BJ (cell line): ENCODE measurements at regions of chr11 and their contacts with region 1.

Region 1: DNA sequence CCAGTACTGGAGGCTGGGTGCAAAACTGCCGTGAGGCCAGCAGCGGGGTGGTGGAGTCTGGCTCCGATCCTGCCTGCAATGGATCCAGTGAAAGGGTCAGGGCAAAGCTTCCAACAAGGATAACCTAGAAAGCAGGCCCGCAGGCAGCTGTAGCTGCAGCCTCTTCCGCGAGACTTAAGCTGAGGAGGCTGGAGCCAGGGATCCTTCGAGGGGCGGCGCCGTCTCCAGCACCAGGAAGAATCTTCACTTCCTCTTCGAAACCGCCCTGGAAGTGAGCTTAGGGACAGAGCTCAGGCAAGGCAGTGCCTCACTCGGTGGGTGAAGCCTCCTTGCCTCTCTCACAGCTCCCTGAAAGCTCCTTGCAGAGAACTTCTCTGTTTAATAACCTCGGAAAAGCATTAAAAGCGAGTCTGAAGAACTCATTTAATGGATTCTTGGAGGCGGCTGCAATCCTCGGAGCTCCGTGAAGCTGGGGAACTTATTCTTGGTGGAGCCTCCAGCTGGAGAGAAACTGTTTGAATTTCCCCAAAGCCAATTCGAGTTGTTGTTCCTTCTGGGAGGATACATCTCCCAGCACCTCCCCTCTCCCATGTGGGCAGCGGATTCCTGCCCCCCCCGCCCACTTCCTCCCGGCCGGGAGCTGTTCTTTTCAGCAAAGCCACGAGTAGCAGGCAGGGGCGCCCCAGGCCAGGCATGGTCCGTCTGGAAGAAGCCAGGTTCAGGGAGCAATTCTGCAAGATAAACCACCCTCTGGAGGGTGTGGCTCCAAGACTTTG is 169.9 kb downstream of the CTTN start:
- DNase-seq: no peak
- H3K4me3 ChIP-seq: peak overlapping the region; percentile 34
- H3K27me3 ChIP-seq: no peaks in the 10 kb centered on the region
- CTCF ChIP-seq: peak; percentile 50

Region 2: GRCh38 chr11:68825571-68825970 is 1742.7 kb before region 1 on chr11:
- CTCF ChIA-PET with region 1: no interaction called
- POLR2A ChIA-PET with region 1: interaction called, 11 read pairs
- DNase-seq: no peak
- H3K4me3 ChIP-seq: no peak overlapping the region
- H3K27me3 ChIP-seq: no peaks in the 10 kb centered on the region
- CTCF ChIP-seq: 0 out of 2 replicates have a peak, but pooled peaks have one; percentile 26

Region 3: GRCh38 chr11:70580036-70580845 is 12.0 kb after region 1 on chr11:
- CTCF ChIA-PET with region 1: no interaction called
- POLR2A ChIA-PET with region 1: no interaction called
- DNase-seq: no peak
- H3K4me3 ChIP-seq: no peak overlapping the region
- H3K27me3 ChIP-seq: no peaks in the 10 kb centered on the region
- CTCF ChIP-seq: no peak